Ovary (tissue), 10 donors: ENCODE measurements at regions of chr16 and their contacts with region 1.

Region 1: GRCh38 chr16:11025120-11025531 is 80.8 kb downstream of the CLEC16A start:
- DNase-seq: no peak
- H3K4me3 ChIP-seq: no peak overlapping the region
- H3K27ac ChIP-seq: no peak overlapping the region
- H3K4me1 ChIP-seq: no peaks in the 10 kb centered on the region
- H3K27me3 ChIP-seq: no peaks in the 10 kb centered on the region
- CTCF ChIP-seq: no peak
- EP300 ChIP-seq: no peak
- POLR2A ChIP-seq: no peak

Region 2: DNA sequence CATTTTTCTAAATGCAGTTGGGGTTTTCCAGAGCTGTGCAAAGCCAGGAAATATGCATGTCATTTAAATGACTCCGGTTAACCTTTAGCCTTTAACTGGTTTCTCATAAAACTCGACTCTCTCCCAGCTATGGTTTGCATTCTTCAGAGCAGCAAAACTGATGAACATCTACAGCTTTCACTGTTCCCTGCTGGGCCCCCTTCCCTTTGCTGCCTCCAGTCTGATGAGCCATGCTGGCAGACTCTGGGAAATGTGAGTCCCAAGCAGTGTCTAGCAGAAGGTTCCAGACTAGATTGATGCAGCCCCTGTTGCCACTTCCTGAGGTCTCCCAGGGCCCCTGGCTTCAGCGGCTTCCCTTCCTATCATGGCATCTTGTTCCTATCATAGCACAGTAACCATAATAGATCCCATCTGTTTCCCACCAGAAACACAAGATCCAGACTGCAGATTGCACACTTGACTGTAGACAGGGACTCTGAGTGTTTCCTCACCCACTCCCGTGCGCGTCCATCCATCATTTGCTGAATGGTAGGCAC is 54.6 kb after region 1 on chr16:
- intact Hi-C with region 1: loop called in 1 of 4 experiments (anchors 10 kb)
- DNase-seq: peak in 1 of 5 donors; percentile 20
- H3K4me3 ChIP-seq: no peak overlapping the region
- H3K27ac ChIP-seq: no peak overlapping the region
- H3K4me1 ChIP-seq: peaks cover 23% of the 10 kb centered on the region
- H3K27me3 ChIP-seq: no peaks in the 10 kb centered on the region
- CTCF ChIP-seq: no peak
- EP300 ChIP-seq: no peak
- POLR2A ChIP-seq: no peak

Region 3: DNA sequence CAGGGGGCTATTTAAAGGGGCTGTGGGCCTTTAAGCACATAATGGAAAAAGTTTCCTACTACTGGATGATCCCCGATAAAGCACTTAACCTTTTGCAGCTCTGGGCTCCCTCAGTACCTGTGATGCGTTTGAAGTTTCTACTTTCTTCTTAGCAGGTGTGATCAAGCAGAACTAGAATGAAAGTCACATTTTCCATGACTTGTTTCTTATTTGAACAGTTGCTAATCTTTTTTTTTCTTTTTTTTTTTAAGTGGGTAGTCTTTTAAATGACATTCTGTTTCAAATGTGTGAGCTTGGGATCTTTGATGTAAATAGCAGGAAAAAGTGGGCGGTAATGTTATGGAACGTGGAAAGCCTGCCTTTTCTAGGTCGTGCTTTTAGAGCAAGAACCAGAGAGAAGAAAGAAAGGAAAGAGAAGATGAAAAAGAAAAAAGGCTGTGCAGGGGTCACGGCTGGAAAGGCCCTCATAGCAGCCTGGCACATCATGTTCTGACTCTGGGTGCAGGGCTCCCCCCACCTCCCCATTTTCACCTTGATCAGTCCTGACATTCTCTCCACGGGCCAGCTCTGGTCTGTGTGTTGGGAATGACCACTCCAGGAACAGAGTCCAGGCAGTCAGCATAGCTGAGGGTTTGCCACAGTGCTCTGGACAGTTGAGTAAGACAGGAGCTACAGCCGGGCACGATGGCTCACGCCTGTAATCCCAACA is 69.9 kb after region 1 on chr16:
- intact Hi-C with region 1: no loop called
- DNase-seq: peak in 1 of 5 donors; percentile 26
- H3K4me3 ChIP-seq: no peak overlapping the region
- H3K27ac ChIP-seq: peak overlapping the region in 1 of 2 donors; percentile 53
- H3K4me1 ChIP-seq: peaks cover 17% of the 10 kb centered on the region
- H3K27me3 ChIP-seq: no peaks in the 10 kb centered on the region
- CTCF ChIP-seq: no peak
- EP300 ChIP-seq: no peak
- POLR2A ChIP-seq: no peak